Posterior vena cava (tissue), 2 donors: ENCODE measurements at regions of chr1 and their contacts with region 1.

Region 1: DNA sequence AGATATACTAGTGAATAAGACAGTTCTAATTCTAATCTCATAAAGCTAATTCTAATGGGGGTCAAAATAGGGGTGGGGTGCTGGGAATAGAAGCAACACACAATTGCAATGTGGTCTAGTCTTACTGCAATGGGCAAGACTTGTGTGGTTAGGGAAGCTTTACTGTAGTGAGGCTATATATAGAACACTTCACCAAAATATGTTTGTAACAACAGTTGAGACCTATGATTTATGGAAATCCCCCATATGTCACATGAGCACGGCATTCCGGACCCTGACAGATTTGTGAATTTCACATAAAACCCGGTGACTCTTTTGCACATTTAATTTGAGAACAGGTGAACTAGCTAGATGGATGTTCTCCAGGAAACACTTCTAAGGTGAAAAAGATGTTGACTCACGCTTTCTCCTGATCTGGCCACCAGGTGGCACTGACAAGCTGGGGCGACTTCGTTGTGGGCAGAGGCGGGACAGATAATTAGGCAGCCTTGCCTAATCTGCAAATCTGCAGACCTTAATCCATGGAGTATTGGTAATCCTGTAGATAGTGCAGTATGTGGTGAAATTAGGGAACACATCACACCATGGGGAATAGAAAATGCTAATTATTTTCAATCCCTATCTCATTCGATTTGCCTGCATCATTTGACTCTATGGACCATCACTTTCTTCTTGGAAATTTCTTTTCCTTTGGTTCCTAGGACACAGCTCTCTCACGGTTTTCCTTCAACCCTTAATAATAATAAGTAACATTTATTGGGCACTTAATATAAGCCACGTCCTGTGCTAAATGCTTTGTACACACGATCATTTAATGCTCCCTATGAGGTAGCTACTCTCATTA is 37.7 kb downstream of the KIAA0040 start:
- DNase-seq: peak; percentile 89

Region 2: GRCh38 chr1:175132436-175132835 is 22.4 kb before region 1 on chr1:
- intact Hi-C with region 1: no loop called
- DNase-seq: no peak

Region 3: DNA sequence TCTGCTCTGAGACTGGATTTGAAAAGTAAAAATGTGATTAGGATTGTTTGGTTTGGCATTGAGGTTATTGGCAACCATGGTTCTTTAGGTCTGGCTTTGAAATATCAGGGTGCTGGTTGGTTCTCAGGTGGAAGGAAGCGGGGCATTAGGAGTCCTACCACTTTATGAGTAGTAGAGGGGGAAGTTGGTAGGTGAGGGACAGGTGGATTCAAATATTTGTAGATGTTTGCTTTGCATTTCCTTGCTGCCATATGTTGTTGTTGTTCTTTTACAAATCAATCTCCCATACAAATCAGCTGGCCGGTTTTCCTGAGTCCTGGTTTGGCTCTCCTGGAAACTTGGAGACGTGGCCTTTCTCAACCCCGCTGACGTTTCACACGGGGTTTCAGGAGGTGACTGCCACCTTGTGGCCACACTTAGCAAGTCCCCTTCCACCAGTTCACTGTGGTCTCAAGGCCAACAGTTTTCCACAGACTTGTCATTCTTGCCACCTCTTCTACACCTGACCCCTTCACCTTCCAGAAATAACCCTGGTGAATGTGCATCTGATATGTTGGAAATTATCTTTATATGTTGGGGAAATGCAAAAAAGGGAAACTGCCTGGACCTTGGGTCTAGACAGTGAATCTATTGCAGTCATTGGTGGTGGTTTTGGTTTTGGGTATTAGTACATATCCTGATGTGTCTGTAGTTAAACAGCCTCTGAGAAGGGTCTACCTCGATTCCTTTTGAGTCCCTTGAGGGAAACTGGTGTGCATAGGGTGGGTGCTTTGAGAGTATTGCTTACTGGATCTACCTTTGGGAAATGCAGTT is 164.8 kb after region 1 on chr1:
- intact Hi-C with region 1: loop called (anchors 5 kb)
- DNase-seq: peak; percentile 90